Activated B cell treated with CpG ODN at 0.5 μM for 24 hours (primary cell): ENCODE measurements at regions of chr10 and their contacts with region 1.

Region 1: DNA sequence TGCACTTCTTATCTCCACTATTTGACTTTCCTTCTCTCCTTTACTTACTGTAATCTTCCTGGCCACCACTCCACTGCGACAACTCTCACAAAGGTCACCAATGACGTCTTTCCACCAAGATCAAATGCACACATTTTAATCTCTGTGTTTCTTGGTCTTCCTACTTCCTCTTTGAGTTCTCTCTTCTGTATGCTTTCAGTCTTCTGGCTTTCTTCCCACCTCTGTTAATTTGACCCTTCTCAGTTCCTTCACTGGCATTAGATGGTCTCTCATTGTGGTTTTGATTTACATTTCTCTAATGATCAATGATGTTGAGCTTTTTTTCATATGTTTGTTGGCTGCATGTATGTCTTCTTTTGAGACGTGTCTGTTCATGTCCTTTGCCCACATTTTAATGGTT is 31.9 kb downstream of the FAM107B start:
- DNase-seq: no peak
- ATAC-seq: peak; percentile 83
- H3K4me3 Mint-ChIP-seq: peak overlapping the region; percentile 64
- H3K27ac Mint-ChIP-seq: peak overlapping the region; percentile 89
- H3K4me1 Mint-ChIP-seq: peaks cover 96% of the 10 kb centered on the region
- H3K27me3 Mint-ChIP-seq: no peaks in the 10 kb centered on the region
- CTCF ChIP-seq: no peak

Region 2: DNA sequence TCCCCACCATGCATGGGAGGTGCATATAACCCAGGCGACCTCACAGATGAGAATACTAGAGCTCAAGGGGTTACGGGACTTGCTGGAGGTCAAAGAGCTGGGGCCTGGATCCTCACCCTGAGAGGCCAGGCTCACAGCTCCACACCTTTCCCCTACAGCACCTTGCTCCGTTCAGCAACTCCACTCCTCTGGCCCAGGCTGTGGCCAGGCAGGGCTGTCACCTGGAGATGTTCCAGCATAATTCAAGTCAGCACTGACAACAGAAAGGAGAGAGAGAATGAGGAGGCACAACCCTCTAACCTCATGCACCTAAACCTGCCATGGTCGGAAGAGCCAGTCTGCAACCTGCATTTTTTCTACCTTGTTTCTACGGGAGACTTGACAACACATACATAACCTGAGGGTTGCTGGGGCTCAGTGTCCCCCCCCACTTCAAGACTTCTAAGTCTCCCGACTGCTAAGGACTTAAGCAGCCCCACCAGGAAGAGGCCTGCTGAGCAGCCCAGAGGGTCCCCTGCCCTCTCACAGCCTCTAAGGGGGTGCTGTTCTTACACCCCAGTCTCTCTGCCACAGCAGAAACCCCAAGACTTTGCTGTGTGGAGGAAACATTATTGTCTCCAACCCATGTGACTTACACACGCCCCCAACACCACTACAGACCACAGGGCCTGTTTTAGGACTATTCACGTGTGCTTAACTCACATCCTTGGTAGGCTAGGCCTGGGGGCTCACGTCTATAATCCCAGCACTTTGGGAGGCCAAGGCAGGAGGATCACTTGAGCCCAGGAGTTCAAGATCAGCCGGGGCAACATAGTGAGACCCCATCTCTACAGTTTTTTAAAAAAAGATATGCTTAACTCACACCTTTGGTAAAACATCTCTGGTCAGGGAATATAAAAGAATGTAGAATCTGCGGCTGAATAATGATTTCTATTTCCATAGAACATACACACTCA is 143.7 kb before region 1 on chr10:
- CTCF ChIA-PET with region 1: no interaction called
- POLR2A ChIA-PET with region 1: interaction called, 58 read pairs
- intact Hi-C with region 1: no loop called
- DNase-seq: no peak
- ATAC-seq: no peak
- H3K4me3 Mint-ChIP-seq: peak overlapping the region; percentile 29
- H3K27ac Mint-ChIP-seq: peak overlapping the region; percentile 75
- H3K4me1 Mint-ChIP-seq: peaks cover 76% of the 10 kb centered on the region
- H3K27me3 Mint-ChIP-seq: no peaks in the 10 kb centered on the region
- CTCF ChIP-seq: no peak

Region 3: DNA sequence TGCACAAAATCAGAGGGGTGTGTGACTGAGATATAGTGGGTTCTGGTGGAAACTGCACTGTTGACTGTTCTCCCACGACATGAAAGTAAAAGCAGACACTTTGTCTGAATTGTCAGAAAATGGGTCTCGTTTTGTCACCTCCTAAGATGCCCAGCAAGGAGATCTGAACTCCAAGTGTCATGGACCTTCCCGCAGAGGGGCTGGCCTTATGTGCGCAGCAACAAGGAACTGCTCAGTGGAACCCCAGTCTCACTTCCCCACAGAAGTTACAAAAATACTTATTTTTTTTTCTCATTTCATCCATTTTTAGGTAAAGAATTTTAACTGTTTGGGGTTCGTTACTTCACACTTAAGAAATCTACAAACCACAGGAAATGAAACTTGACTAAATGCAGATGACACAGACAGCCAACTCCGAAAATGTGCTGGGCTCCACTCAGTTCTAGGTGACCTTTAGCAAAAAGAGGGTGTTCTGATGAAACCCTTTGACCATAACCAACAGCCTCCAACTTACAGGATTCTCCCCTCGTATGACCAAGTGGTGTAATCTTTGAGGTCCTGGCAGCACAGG is 83.1 kb before region 1 on chr10:
- CTCF ChIA-PET with region 1: no interaction called
- POLR2A ChIA-PET with region 1: interaction called, 10 read pairs
- intact Hi-C with region 1: loop called (anchors 1 kb)
- DNase-seq: no peak
- ATAC-seq: peak; percentile 68
- H3K4me3 Mint-ChIP-seq: peak overlapping the region; percentile 78
- H3K27ac Mint-ChIP-seq: peak overlapping the region; percentile 94
- H3K4me1 Mint-ChIP-seq: peaks cover 85% of the 10 kb centered on the region
- H3K27me3 Mint-ChIP-seq: no peaks in the 10 kb centered on the region
- CTCF ChIP-seq: no peak

Region 4: GRCh38 chr10:14761372-14761771 is 18.6 kb after region 1 on chr10:
- CTCF ChIA-PET with region 1: interaction called, 3 read pairs
- POLR2A ChIA-PET with region 1: interaction called, 105 read pairs
- intact Hi-C with region 1: loop called (anchors 1 kb)
- DNase-seq: no peak
- ATAC-seq: peak; percentile 87
- H3K4me3 Mint-ChIP-seq: peak overlapping the region; percentile 64
- H3K27ac Mint-ChIP-seq: peak overlapping the region; percentile 67
- H3K4me1 Mint-ChIP-seq: peaks cover 37% of the 10 kb centered on the region
- H3K27me3 Mint-ChIP-seq: no peaks in the 10 kb centered on the region
- CTCF ChIP-seq: no peak

Region 5: DNA sequence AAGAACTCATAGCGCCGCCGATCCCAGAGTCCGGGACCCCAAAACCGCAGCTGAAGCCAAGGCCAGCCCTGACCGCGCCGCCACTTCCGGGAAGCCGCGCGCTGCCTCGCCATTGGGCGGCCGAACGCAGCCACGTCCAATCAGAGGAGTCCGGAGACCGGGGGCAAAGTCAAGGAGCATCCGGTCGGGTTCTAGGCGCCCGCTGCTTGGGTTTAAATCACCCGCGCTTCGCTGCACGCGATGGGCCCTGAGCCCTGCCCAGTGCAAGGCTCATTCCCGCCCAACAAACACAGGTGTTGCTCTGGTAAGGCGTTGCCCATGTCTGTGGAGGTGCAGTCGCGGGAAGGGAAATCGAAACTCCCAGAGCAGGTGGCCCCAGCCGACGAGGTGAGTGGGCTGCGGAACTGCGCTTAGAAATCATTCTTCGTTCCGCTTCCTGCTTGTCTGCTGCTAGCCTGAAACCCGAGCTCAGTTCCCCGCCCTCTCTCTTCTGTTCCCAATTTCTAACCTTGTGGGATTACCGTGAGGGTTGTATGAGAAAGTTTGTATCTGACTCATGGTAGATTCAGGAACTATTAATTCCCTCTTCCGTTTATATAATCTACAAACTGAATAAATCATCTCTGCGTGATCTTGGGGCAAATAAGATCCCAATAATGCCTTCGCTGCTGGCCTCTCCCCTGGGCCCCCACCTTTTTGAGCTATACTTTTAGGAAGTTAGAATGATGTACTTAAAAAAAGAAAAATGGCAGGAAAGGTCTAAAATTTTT is 211.4 kb after region 1 on chr10 and contains the start of gene DCLRE1C:
- CTCF ChIA-PET with region 1: no interaction called
- POLR2A ChIA-PET with region 1: interaction called, 3 read pairs
- intact Hi-C with region 1: loop called (anchors 5 kb)
- DNase-seq: peak; percentile 77
- ATAC-seq: peak; percentile 78
- H3K4me3 Mint-ChIP-seq: peak within 1 kb of the TSS; percentile 90
- H3K27ac Mint-ChIP-seq: peak within 1 kb of the TSS; percentile 96
- H3K4me1 Mint-ChIP-seq: peaks cover 56% of the 10 kb centered on the region
- H3K27me3 Mint-ChIP-seq: no peaks in the 10 kb centered on the region
- CTCF ChIP-seq: no peak
- total RNA-seq, gene DCLRE1C: 38.0 and 43.8 TPM in 2 replicates

Region 6: DNA sequence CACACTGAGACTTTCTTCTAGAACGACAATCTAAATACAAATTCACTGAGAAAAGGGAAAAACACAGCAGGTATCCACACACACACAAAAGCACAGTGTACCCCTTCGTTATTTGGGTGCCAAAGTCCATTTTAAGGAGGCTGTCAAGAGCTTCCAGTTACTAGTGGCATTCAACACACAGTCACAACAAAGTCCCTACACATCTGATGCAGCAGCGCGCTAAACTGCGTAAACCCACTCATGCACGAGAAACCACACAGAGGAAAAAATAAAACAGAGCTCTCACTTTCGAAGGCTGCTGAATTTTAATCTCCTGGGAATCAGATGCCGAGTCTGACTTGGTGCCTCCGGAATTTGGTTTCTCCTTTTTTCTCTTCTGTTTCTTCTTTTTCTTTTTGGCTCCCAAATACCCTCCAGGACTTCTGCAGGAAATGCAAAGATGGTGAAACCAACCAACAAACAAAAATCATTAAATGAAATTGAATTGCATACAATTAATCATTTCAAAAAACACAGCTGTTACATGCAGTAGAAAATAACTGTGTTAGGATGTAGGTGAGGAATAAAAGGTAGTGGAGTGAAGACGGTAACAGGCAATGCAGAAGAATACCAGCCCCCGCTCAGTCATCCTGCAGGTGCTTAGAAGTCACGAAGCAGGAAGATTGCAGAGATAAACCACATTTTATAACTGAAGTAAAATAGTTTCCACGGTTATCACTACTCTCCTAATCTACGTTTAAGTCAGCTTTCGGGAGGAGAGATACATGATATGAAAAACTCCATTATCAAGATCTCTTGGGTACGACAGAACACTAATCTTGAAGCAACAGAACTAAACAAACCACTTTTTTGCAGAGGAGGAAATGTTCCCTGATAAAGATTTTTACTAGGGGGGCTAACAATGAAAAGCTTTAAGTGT is 398.6 kb after region 1 on chr10:
- CTCF ChIA-PET with region 1: no interaction called
- POLR2A ChIA-PET with region 1: no interaction called
- intact Hi-C with region 1: loop called (anchors 2 kb)
- DNase-seq: peak; percentile 32
- ATAC-seq: peak; percentile 94
- H3K4me3 Mint-ChIP-seq: peak overlapping the region; percentile 74
- H3K27ac Mint-ChIP-seq: peak overlapping the region; percentile 69
- H3K4me1 Mint-ChIP-seq: peaks cover 40% of the 10 kb centered on the region
- H3K27me3 Mint-ChIP-seq: no peaks in the 10 kb centered on the region
- CTCF ChIP-seq: no peak